ENCODE measurements at regions of chr18 and their contacts with region 1.

Region 1: DNA sequence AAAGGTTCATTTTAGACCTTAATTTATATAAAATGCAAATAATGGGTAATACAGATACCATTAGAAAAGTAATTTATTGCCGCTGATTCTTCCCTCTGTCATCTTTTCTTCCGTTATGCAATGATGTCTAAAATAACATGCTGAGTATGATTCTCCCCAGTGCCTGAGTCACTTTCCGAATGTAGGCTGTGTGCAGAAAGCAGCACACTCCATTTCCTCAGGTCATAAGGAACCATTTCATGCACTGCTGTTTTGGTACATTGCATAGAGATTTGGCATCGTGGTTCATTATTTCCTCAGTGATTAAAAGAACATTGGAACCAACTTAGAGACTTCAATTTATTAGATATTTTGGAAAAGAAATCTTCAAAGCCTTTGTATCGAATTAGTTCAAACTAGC is 173.5 kb downstream of the CDH2 start:
- DNase-seq: peak in 2 of 7 donors; percentile 21 to 29
- H3K4me3 ChIP-seq: no peak overlapping the region
- H3K27ac ChIP-seq: peak overlapping the region in 2 of 5 donors; percentile 28 to 43
- H3K4me1 ChIP-seq: no peaks in the 10 kb centered on the region
- H3K27me3 ChIP-seq: no peaks in the 10 kb centered on the region
- CTCF ChIP-seq: no peak
- POLR2A ChIP-seq: no peak

Region 2: GRCh38 chr18:27942701-27943100 is 60.8 kb before region 1 on chr18:
- intact Hi-C with region 1: no loop called
- DNase-seq: no peak
- H3K4me3 ChIP-seq: no peak overlapping the region
- H3K27ac ChIP-seq: no peak overlapping the region
- H3K4me1 ChIP-seq: no peaks in the 10 kb centered on the region
- H3K27me3 ChIP-seq: no peaks in the 10 kb centered on the region
- CTCF ChIP-seq: no peak
- POLR2A ChIP-seq: no peak

Region 3: DNA sequence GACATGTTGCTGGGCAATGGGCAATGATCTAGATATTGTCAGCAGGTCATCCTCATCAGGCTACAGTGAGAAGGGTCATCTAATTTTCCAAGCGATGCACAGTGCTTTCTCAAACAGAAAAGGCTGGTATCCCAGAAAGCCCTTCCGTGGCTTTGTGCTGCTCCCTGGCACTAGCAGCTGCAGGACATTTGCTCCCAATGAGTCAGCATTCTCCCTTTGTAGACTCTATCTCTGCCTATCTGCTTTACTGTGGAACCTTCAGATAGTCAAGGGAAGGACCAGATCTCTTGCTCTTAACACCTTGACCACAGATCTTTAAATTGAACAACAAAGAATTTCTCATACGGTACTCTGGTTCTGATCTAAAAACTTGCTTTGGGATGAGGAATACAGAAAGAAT is 72.0 kb after region 1 on chr18:
- intact Hi-C with region 1: no loop called
- DNase-seq: peak in 2 of 7 donors; percentile 19 to 29
- H3K4me3 ChIP-seq: no peak overlapping the region
- H3K27ac ChIP-seq: peak overlapping the region in 1 of 5 donors; percentile 23
- H3K4me1 ChIP-seq: peaks cover 17 to 32% of the 10 kb centered on the region in 2 donors
- H3K27me3 ChIP-seq: no peaks in the 10 kb centered on the region
- CTCF ChIP-seq: no peak
- POLR2A ChIP-seq: no peak

Region 4: GRCh38 chr18:28176933-28177827 is 173.7 kb after region 1 on chr18 and contains the start of gene CDH2:
- intact Hi-C with region 1: loop called (anchors 10 kb)
- DNase-seq: peak; percentile 84 to 92 (median 89)
- H3K4me3 ChIP-seq: peak within 1 kb of the TSS; percentile 50 to 89 (median 73)
- H3K27ac ChIP-seq: peak within 1 kb of the TSS; percentile 64 to 92 (median 83)
- H3K4me1 ChIP-seq: peaks cover 3 to 14% of the 10 kb centered on the region in 2 donors
- H3K27me3 ChIP-seq: no peaks in the 10 kb centered on the region
- CTCF ChIP-seq: peak in 3 of 6 experiments; percentile 20 to 35 (median 22)
- POLR2A ChIP-seq: peak in 1 of 2 donors; percentile 84
- total RNA-seq, gene CDH2: 76.8 to 305 (median 132) TPM